HAP-1 (cell line): ENCODE measurements at regions of chr20 and their contacts with region 1.

Region 1: DNA sequence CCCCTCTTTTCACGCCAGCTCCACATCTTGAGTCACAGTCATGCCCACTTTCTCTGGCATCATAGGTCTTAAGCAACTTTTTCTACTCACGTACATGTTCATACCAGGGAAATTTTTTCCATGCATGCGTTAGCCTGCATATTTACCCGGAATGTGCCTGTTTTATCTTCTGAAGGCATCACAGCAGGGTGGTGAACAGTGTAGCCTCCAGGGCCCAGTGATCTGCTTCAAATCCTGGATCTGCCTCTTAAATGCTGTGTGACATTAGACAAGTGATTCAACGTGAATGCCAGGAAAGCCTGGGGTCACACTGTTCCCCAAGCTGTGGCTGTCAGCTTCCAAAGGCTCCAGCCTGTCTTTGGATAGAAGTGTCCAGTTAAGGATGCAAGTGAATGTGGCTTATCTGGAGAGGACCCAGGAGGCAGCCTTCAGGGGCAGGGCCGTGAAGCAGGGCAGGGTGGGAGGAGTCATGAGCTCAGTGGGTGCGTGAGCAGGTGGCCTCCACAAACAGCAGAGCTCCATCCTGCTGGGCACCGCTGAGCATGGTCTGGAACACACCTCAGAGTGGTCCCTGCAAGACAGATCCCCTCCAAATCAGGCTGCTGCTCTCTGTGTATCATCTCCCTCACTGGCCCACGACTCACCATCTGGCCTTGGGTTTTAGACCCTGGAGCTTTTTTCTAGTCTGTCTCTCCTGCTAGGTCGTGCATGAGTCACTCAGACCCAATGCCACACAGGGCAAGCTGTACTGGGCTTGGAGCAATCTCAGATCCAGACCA is 30.4 kb upstream of the CD93 start:
- DNase-seq: no peak
- H3K4me3 ChIP-seq: no peak overlapping the region
- H3K4me1 ChIP-seq: no peaks in the 10 kb centered on the region
- H3K27me3 ChIP-seq: no peaks in the 10 kb centered on the region

Region 2: GRCh38 chr20:22586645-22587310 is 529.7 kb before region 1 on chr20:
- in situ Hi-C with region 1: no loop called
- DNase-seq: no peak
- H3K4me3 ChIP-seq: no peak overlapping the region
- H3K4me1 ChIP-seq: no peaks in the 10 kb centered on the region
- H3K27me3 ChIP-seq: no peaks in the 10 kb centered on the region

Region 3: DNA sequence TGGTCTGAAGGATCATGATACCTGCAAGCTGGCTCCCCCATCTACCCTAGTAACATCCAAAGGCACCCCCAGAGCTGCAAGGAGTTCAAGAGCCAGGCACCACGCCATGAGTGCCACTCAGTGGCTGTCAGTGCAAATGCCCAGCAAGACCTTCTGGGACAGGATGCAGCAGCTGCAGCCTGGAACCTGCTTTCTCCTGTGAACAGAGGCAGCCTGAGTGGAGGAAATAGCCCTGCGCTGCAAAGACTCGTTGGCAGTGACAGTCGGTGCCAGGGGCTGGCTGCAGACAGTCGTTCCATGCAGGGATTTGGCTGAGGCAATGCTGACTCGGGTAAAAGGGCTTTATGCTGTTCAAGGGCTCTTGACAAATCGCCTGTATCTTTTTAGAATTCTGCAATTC is 97.1 kb before region 1 on chr20:
- in situ Hi-C with region 1: loop called (anchors 25 kb)
- DNase-seq: no peak
- H3K4me3 ChIP-seq: no peak overlapping the region
- H3K4me1 ChIP-seq: no peaks in the 10 kb centered on the region
- H3K27me3 ChIP-seq: no peaks in the 10 kb centered on the region